OCI-LY7 (cell line): ENCODE measurements at regions of chr1 and their contacts with region 1.

Region 1: DNA sequence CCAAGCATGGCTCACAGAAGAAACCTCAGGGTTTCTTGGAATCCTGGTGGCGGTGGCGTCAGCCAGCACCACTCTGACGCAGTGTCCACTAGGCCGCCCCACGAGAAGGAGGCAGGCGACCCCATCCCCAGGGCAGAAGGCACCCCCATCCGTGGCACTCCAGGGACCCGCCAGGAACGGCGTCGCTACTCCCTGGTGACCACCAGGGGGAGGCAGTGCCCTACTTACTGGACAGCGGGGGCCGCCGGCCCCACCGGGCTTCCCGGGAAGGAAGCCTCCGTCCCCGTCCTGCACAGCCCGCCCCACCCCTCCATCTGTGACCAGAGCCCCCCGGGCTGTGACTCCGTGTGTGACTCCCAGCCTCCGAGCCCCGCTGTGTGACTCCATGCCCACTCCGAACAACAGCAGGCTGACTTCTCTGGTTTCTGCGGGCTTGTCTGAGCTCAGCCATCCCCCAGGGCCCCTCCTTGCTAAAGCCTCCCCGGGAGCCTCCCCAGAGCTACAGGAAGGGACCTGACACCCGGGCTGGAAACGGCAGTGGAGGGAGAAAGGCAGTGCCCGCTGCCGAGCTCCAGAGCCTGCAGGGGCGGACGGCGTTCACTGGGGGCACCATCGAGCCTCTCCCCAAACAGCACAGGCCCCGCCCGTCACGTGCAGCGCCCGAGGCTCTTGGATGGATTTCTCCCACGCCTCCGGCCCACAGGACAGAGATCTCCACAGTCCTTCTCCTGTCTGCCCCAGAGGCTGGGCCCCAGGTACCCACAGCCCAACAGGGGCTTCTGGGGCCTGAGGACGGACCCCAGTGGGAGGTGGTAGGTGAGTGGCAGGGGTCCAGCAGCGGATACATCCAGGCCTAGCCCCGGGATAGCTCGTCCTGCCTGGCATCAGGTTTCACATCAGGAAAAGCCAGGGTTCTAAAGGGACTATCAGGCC is 21.1 kb downstream of the KIF17 start:
- DNase-seq: peak; percentile 83
- H3K4me3 ChIP-seq: peak overlapping the region; percentile 76
- H3K27ac ChIP-seq: peak overlapping the region; percentile 25
- H3K4me1 ChIP-seq: no peaks in the 10 kb centered on the region
- CTCF ChIP-seq: peak; percentile 93

Region 2: GRCh38 chr1:20732588-20733360 is 36.1 kb after region 1 on chr1 and contains the start of gene SH2D5:
- CTCF ChIA-PET with region 1: interaction called, 3 read pairs
- POLR2A ChIA-PET with region 1: no interaction called
- intact Hi-C with region 1: loop called (anchors 2 kb)
- DNase-seq: peak; percentile 65
- H3K4me3 ChIP-seq: peak within 1 kb of the TSS; percentile 67
- H3K27ac ChIP-seq: no peak within 1 kb of the TSS
- H3K4me1 ChIP-seq: peaks cover 14% of the 10 kb centered on the region
- CTCF ChIP-seq: peak; percentile 64
- total RNA-seq, gene SH2D5: 0.46 TPM in 1 of 2 replicates, not detected in the other

Region 3: DNA sequence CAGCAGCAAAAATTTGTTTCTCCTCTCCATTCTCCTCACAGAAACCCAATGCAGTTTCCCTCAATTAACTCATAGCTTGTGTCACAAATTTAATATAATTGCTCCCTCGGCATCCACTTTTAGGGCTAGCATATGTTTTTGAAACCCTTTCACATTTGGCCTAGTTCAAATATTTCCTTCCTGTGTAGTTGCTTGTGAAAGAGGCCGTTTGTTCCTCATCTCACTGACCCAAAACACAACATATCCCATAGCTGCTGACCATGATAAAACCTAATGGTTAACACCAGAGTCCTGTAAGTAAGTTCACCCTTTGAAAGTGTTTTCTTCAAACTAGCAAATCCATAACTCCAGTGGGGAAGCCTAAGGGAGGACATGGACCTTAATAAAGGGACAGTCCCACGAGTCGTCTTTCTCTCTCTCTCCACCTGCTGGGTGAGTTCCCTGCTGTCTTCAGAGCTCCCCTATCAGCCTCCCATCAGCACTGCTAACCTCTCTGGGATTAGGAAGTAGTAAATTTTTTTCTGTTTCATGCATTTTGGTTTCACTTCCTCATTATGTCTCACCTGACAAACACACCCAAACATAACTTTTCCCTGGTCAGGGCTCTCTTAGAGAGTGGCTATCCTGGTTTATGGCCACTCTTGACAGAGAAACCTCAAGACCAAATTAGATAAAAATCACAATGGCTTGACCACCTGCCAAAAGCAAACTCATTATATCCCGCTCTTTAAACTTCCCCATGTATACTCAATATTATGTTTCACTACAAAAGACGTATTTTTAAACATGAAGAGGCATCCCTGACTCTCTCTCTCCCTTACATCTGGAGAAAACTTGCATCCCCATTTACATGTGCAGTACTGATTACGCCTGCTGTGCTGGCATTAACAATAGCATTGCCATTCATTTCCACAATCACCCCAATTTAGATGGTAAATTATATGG is 268.1 kb after region 1 on chr1:
- CTCF ChIA-PET with region 1: no interaction called
- POLR2A ChIA-PET with region 1: no interaction called
- intact Hi-C with region 1: loop called (anchors 10 kb)
- DNase-seq: peak; percentile 80
- H3K4me3 ChIP-seq: peak overlapping the region; percentile 14
- H3K27ac ChIP-seq: peak overlapping the region; percentile 23
- H3K4me1 ChIP-seq: peaks cover 18% of the 10 kb centered on the region
- CTCF ChIP-seq: peak; percentile 46; the same call in 1 of the 2 replicates